Left lung (tissue), 14 donors: ENCODE measurements at regions of chr9 and their contacts with region 1.

Region 1: DNA sequence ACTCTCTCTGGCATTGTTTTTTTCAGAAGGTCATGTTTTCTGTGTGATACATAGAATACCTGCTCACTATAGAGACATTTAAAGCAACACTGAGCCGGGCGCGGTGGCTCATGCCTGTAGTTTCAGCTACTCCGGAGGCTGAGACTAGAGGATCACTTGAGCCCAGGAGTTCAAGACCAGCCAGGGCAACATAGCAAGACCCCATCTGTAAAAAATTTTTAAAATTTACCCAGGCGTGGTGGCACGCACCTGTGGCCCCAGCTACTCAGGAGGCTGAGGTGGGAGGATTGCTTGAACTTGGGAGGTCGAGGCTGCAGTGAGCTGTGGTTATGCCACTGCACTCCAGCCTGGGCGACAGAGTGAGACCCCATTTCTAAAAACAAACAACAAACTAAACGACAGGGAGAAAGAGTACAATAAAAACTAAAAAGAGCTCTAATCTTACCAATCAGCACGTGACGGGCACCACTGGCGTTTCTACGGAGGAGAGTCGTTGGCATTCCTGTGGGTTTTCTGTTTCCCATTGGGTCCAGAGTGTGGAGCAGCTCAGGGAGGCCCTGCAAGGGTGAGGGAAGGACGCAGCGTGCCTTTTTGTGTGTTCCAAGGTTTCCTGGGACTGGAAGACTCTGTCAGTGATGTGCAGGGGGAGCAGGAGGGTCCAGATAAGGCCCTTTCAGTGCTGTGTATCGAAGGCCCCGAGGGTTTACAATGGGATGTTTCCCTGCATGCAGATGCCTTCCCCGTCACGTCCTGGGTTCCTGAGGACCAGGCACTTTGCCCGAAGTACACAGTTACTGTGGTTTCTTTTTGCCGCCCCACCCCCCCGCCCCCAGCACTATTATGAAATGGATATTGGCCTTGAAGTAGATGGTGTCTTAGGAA is 7.2 kb upstream of the RNU6ATAC start:
- DNase-seq: no peak
- ATAC-seq: peak; percentile 44
- H3K4me3 ChIP-seq: no peak overlapping the region
- H3K27ac ChIP-seq: peak overlapping the region; percentile 26 to 28
- H3K4me1 ChIP-seq: peaks cover 13 to 43% of the 10 kb centered on the region in 2 donors
- H3K27me3 ChIP-seq: peaks cover 0 to 22% of the 10 kb centered on the region in 2 donors
- CTCF ChIP-seq: no peak

Region 2: DNA sequence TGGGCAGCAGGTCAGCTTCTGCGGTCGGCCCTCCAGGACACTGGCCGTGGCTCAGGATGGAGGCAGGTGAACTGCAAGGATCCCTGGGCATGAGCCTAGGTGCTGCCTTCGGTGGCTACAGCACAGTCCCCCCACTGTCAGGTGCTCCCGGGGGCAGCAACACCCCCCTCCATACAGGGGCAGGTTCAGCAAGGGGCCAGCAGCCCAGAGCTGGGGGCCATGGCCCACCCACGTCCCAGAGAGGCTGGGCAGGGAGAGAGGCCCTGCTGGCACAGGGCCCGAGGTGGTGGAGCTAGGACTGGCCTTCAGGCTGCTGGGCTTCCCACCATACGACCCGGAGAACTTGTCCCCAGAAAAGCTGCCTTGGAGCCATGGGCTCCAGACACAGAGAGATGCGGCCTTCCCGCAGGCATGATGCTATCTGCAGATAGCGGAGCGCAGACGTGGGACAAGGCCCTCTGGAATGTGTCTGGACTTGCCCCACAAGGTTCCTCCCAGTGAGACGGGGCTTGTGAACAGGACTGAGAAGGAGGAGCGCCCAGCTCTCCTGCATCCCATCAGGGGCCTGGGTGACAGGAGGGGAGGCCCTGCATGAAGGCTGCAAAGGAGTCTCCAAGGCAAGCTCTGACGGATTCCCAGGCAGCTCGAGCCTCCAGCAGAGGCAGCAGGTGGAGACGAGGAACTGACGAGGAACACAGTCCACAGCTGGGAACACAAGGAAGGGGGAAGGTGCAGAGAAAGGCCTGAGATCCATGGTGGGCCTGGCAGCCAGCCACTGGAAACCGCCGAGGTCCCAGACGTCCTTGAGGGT is 290.5 kb before region 1 on chr9:
- intact Hi-C with region 1: no loop called
- DNase-seq: no peak
- ATAC-seq: no peak
- H3K4me3 ChIP-seq: no peak overlapping the region
- H3K27ac ChIP-seq: no peak overlapping the region
- H3K4me1 ChIP-seq: no peaks in the 10 kb centered on the region
- H3K27me3 ChIP-seq: no peaks in the 10 kb centered on the region
- CTCF ChIP-seq: no peak

Region 3: GRCh38 chr9:134010310-134011173 is 161.0 kb before region 1 on chr9:
- intact Hi-C with region 1: no loop called
- DNase-seq: no peak
- ATAC-seq: no peak
- H3K4me3 ChIP-seq: no peak overlapping the region
- H3K27ac ChIP-seq: no peak overlapping the region
- H3K4me1 ChIP-seq: no peaks in the 10 kb centered on the region
- H3K27me3 ChIP-seq: peaks cover 0 to 13% of the 10 kb centered on the region in 2 donors
- CTCF ChIP-seq: no peak

Region 4: GRCh38 chr9:134443168-134444037 is 271.8 kb after region 1 on chr9:
- intact Hi-C with region 1: loop called (anchors 2 to 10 kb)
- DNase-seq: peak; percentile 57 to 97 (median 89)
- ATAC-seq: peak; percentile 93
- H3K4me3 ChIP-seq: no peak overlapping the region
- H3K27ac ChIP-seq: peak overlapping the region in 1 of 2 donors; percentile 85
- H3K4me1 ChIP-seq: peaks cover 7 to 47% of the 10 kb centered on the region in 2 donors
- H3K27me3 ChIP-seq: peaks cover 0 to 18% of the 10 kb centered on the region in 2 donors
- CTCF ChIP-seq: peak; percentile 98 to 99